ENCODE measurements at regions of chr6 and their contacts with region 1.

Region 1: GRCh38 chr6:19137505-19137904 is 699.7 kb upstream of the ID4 start:
- DNase-seq: no peak
- H3K4me3 ChIP-seq: no peak overlapping the region
- H3K27ac ChIP-seq: no peak overlapping the region
- H3K4me1 ChIP-seq: no peaks in the 10 kb centered on the region
- CTCF ChIP-seq: no peak

Region 2: GRCh38 chr6:19997104-19997503 is 859.6 kb after region 1 on chr6:
- CTCF ChIA-PET with region 1: no interaction called
- POLR2A ChIA-PET with region 1: interaction called, 11 read pairs
- intact Hi-C with region 1: no loop called
- DNase-seq: no peak
- H3K4me3 ChIP-seq: no peak overlapping the region
- H3K27ac ChIP-seq: no peak overlapping the region
- H3K4me1 ChIP-seq: no peaks in the 10 kb centered on the region
- CTCF ChIP-seq: no peak

Region 3: DNA sequence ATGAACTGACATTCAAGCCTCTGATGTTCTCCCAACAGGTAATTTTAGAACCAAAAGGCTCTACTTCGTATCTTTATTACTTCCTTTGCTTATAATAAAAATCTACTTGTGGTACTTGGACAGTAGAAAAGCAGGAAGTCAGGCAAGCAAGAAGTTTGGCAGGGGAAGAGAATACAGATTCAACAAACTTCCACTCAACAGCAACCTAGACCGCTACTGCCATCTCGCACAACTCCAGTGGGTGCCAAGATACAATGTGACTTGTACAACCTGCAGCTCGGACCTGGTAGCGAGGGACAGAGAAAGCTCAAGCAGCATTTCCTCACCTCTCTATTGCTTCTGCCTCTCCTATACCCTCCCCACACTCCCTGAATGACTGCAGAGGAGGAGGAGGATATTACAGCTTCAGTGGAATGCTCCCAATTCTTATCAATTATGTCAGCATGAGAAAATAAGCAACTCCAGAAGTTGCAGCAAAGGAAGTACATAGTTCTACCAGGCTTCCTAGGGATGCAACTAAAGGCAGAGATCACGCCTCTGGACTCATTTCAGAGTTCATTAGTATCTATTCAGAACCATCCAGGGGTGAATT is 998.3 kb after region 1 on chr6:
- CTCF ChIA-PET with region 1: interaction called, 11 read pairs
- POLR2A ChIA-PET with region 1: no interaction called
- intact Hi-C with region 1: no loop called
- DNase-seq: no peak
- H3K4me3 ChIP-seq: no peak overlapping the region
- H3K27ac ChIP-seq: no peak overlapping the region
- H3K4me1 ChIP-seq: no peaks in the 10 kb centered on the region
- CTCF ChIP-seq: no peak